Calu3 (cell line): ENCODE measurements at regions of chr17 and their contacts with region 1.

Region 1: GRCh38 chr17:39306509-39307212 is 80.9 kb upstream of the STAC2 start:
- DNase-seq: no peak
- H3K4me3 Mint-ChIP-seq: no peak overlapping the region
- H3K27ac Mint-ChIP-seq: no peak overlapping the region
- H3K4me1 Mint-ChIP-seq: no peaks in the 10 kb centered on the region
- H3K27me3 Mint-ChIP-seq: no peaks in the 10 kb centered on the region
- CTCF ChIP-seq: no peak

Region 2: DNA sequence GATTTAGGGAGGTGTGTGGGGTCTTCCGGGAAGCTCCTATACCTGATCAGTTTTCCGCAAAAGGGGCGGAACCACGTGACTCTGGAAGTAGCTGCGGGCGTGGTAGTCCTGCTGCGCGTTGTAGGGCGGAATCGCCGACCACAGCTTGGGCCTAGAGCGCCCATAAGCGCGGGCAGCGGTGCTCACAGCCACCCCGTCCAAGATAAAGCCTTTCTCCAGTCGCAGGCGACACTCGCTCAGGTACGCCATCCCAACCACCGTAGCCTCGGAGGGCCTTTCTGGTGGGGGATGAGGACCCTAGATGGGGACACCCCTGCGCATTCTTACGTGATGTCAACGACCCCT is 465.5 kb before region 1 on chr17:
- CTCF ChIA-PET with region 1: interaction called, 12 read pairs
- intact Hi-C with region 1: no loop called
- DNase-seq: no peak
- H3K4me3 Mint-ChIP-seq: no peak overlapping the region
- H3K27ac Mint-ChIP-seq: no peak overlapping the region
- H3K4me1 Mint-ChIP-seq: peaks cover 21% of the 10 kb centered on the region
- H3K27me3 Mint-ChIP-seq: no peaks in the 10 kb centered on the region
- CTCF ChIP-seq: no peak

Region 3: GRCh38 chr17:39335704-39336223 is 29.1 kb after region 1 on chr17:
- CTCF ChIA-PET with region 1: no interaction called
- intact Hi-C with region 1: no loop called
- DNase-seq: no peak
- H3K4me3 Mint-ChIP-seq: no peak overlapping the region
- H3K27ac Mint-ChIP-seq: no peak overlapping the region
- H3K4me1 Mint-ChIP-seq: no peaks in the 10 kb centered on the region
- H3K27me3 Mint-ChIP-seq: no peaks in the 10 kb centered on the region
- CTCF ChIP-seq: no peak

Region 4: DNA sequence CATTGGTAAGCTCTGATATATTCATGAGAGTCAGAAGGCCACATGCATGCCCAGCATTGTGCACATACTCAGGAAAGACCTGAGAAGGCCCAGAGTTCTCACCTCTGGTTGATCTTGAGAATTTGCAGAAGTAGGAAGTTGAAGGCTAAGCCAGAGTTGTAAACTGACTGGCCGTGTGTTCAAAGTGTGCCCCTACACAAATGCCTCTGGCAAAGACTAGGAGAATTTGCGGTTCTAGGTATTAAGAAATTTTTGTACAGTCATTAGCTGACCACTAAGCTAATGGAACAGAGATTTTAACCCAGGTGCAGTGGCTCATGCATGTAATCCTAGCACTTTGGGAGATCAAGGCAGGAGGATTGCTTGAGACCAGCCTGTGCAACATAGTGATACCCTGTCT is 69.8 kb after region 1 on chr17:
- CTCF ChIA-PET with region 1: no interaction called
- intact Hi-C with region 1: no loop called
- DNase-seq: no peak
- H3K4me3 Mint-ChIP-seq: no peak overlapping the region
- H3K27ac Mint-ChIP-seq: no peak overlapping the region
- H3K4me1 Mint-ChIP-seq: peaks cover 23% of the 10 kb centered on the region
- H3K27me3 Mint-ChIP-seq: no peaks in the 10 kb centered on the region
- CTCF ChIP-seq: no peak

Region 5: GRCh38 chr17:39996800-39997199 is 690.1 kb after region 1 on chr17:
- CTCF ChIA-PET with region 1: no interaction called
- intact Hi-C with region 1: no loop called
- DNase-seq: no peak
- H3K4me3 Mint-ChIP-seq: no peak overlapping the region
- H3K27ac Mint-ChIP-seq: no peak overlapping the region
- H3K4me1 Mint-ChIP-seq: no peaks in the 10 kb centered on the region
- H3K27me3 Mint-ChIP-seq: no peaks in the 10 kb centered on the region
- CTCF ChIP-seq: no peak